Heart right ventricle (tissue), 16 donors: ENCODE measurements at regions of chr11 and their contacts with region 1.

Region 1: DNA sequence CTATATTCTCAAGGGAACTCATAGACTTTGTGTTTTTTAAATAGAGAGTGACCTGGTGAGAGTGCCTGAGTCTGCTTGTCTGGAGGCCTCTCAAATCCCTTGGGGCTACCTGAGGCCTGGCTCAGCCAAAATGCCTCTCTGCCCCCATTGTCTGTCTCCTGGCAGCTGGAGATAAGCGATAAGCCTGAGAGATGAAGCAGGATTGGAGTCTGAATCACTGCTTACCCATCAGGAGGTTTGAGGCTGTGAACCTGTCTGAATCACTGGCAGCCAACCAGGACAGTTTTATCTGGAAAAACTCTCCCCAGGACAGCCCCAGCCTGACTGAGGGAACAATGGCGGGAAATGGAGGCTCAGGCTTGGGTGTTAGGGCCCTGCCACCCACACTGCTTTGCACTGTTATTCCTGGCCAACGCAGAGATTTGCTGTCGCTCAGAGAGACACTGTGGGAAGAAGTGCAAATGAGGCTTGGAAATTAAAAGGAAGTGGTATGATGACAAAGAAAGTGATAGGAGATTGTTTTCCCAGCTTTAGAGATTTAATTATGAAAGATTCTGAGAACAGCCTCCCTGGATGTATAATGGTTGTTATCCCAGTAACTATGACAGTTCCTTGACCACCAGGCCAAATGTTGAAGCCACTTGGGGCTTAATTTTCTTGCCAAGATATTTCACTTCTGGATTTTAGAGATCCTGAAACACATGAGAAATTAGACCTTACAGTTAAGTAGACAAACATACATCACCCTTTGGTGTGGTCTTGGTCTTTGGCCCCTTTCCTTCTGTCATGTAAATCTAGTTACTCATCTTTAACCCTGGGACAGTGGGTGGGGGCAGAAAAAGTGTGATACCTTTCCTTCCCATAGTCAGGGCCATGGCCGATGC is 102.1 kb downstream of the RASSF10 start:
- DNase-seq: peak; percentile 16 to 63
- ATAC-seq: peak; percentile 60 to 94 (median 88)
- H3K4me3 ChIP-seq: no peak overlapping the region
- H3K27ac ChIP-seq: peak overlapping the region in 3 of 10 donors; percentile 10 to 61 (median 56)
- H3K4me1 ChIP-seq: peaks cover 0 to 26% (median 17%) of the 10 kb centered on the region in 9 donors
- H3K27me3 ChIP-seq: no peaks in the 10 kb centered on the region
- CTCF ChIP-seq: no peak

Region 2: GRCh38 chr11:13080861-13081405 is 30.2 kb before region 1 on chr11:
- intact Hi-C with region 1: loop called in 1 of 10 experiments (anchors 1 kb)
- DNase-seq: no peak
- ATAC-seq: no peak
- H3K4me3 ChIP-seq: no peak overlapping the region
- H3K27ac ChIP-seq: no peak overlapping the region
- H3K4me1 ChIP-seq: no peaks in the 10 kb centered on the region
- H3K27me3 ChIP-seq: peaks cover 0 to 53% (median 13%) of the 10 kb centered on the region in 7 donors
- CTCF ChIP-seq: no peak

Region 3: GRCh38 chr11:13140028-13140870 is 29.1 kb after region 1 on chr11:
- intact Hi-C with region 1: no loop called
- DNase-seq: no peak
- ATAC-seq: no peak
- H3K4me3 ChIP-seq: no peak overlapping the region
- H3K27ac ChIP-seq: no peak overlapping the region
- H3K4me1 ChIP-seq: peaks cover 0 to 23% (median 5%) of the 10 kb centered on the region in 9 donors
- H3K27me3 ChIP-seq: peaks cover 0 to 10% (median 0%) of the 10 kb centered on the region in 7 donors
- CTCF ChIP-seq: no peak

Region 4: DNA sequence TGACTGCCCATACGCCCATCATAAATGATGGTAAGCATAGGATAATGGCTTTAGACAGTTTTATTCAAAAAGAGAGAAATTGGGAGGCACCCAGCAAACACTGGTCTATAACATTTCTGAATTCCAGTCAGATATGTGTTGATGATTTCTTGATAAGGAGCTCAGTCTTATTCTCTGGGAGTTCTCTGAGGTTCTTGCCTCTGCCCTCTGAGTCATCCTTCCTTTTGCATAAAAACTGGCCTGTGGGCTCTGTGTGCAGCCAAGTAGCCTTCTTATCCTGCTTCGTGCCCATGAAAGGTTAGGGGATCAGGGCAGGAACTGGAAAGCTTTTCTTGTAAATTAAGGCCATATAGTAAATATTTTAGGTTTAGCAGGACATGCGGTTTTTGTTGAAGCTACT is 606.2 kb after region 1 on chr11:
- intact Hi-C with region 1: no loop called
- DNase-seq: no peak
- ATAC-seq: no peak
- H3K4me3 ChIP-seq: no peak overlapping the region
- H3K27ac ChIP-seq: no peak overlapping the region
- H3K4me1 ChIP-seq: peaks cover 0 to 15% (median 0%) of the 10 kb centered on the region in 9 donors
- H3K27me3 ChIP-seq: no peaks in the 10 kb centered on the region
- CTCF ChIP-seq: no peak